AG04450 (cell line): ENCODE measurements at regions of chr22 and their contacts with region 1.

Region 1: DNA sequence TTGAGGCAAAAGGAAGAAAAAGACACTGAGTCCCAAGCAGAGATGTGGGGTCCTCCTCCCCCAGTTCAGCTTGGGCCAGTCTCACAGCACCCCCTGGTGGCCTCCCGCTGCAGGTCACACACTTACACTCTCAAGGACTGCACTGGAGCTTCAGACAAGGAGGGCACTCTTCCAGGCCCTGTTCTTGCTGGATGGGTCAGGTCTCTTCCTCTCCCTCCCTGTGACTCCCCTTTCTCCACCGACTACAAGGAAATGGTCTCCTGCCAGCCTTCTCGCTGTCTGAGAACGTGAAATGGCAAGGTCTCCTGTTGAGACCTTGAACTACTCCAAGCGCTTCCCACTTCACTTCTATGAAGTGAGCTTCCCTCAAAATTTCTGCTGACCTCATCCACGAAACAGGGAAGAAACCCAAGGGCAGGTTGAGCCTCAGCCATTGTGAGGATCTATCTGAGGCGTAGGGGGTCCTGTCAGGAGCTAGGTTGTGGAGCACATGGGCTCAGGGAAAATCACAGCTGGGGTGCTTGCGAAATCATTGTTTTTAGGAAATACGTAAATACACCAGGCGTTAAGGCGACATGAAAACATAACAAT is 11.2 kb upstream of the IGLL1 start:
- DNase-seq: peak; percentile 20
- H3K4me3 ChIP-seq: no peak overlapping the region
- H3K27ac ChIP-seq: no peak overlapping the region
- H3K27me3 ChIP-seq: no peaks in the 10 kb centered on the region
- CTCF ChIP-seq: peak; percentile 89

Region 2: DNA sequence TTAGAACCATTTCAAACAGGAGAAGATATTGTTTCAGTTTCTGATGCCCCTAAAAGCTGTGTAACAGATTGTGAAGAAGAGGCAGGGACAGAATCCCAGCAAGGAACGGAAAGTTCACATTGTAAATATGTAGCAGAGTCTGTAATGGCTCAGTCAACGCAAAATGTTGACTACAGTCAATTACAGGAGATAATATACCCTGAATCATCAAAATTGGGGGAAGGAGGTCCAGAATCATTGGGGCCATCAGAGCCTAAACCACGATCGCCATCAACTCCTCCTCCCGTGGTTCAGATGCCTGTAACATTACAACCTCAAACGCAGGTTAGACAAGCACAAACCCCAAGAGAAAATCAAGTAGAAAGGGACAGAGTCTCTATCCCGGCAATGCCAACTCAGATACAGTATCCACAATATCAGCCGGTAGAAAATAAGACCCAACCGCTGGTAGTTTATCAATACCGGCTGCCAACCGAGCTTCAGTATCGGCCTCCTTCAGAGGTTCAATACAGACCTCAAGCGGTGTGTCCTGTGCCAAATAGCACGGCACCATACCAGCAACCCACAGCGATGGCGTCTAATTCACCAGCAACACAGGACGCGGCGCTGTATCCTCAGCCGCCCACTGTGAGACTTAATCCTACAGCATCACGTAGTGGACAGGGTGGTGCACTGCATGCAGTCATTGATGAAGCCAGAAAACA is 52.0 kb before region 1 on chr22:
- CTCF ChIA-PET with region 1: interaction called, 17 read pairs
- POLR2A ChIA-PET with region 1: no interaction called
- DNase-seq: peak; percentile 29
- H3K4me3 ChIP-seq: no peak overlapping the region
- H3K27ac ChIP-seq: no peak overlapping the region
- H3K27me3 ChIP-seq: peaks cover 2% of the 10 kb centered on the region
- CTCF ChIP-seq: peak; percentile 78

Region 3: DNA sequence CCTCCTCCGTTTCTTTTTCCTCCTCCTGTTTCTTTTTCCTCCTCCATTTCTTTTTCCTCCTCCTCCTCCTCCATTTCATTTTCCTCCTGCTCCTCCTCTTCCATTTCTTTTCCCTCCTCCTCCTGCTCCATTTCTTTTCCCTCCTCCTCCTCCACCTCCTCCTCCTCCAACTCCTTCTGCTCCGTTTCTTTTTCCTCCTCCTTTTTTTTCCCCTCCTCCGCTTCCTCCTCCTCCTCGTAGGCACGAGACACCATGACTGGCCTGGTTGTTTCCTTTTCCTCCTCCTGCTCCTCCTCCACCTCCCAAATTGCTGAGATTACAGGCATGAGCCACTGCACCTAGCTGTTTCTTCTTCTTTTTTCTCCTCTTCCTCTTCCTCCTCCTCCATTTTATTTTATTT is 66.4 kb after region 1 on chr22:
- CTCF ChIA-PET with region 1: no interaction called
- POLR2A ChIA-PET with region 1: no interaction called
- DNase-seq: no peak
- H3K4me3 ChIP-seq: no peak overlapping the region
- H3K27ac ChIP-seq: no peak overlapping the region
- H3K27me3 ChIP-seq: no peaks in the 10 kb centered on the region
- CTCF ChIP-seq: no peak